ENCODE measurements at regions of chr3 and their contacts with region 1.

Region 1: GRCh38 chr3:32391643-32392535 is at the start of gene CMTM7:
- DNase-seq: peak; percentile 80
- ATAC-seq: peak; percentile 49
- H3K4me3 Mint-ChIP-seq: peak within 1 kb of the TSS; percentile 98
- H3K27ac Mint-ChIP-seq: peak within 1 kb of the TSS; percentile 98
- H3K4me1 Mint-ChIP-seq: peaks cover 63% of the 10 kb centered on the region
- H3K27me3 Mint-ChIP-seq: no peaks in the 10 kb centered on the region
- total RNA-seq, gene CMTM7: 41.1 to 67.0 TPM

Region 2: GRCh38 chr3:32106280-32106928 is 285.5 kb before region 1 on chr3 and contains the start of gene GPD1L:
- CTCF ChIA-PET with region 1: no interaction called
- POLR2A ChIA-PET with region 1: no interaction called
- intact Hi-C with region 1: loop called in 1 of 2 experiments (anchors 5 kb)
- DNase-seq: peak; percentile 96
- ATAC-seq: peak; percentile 99
- H3K4me3 Mint-ChIP-seq: peak within 1 kb of the TSS; percentile 92
- H3K27ac Mint-ChIP-seq: peak within 1 kb of the TSS; percentile 90
- H3K4me1 Mint-ChIP-seq: peaks cover 30% of the 10 kb centered on the region
- H3K27me3 Mint-ChIP-seq: no peaks in the 10 kb centered on the region
- total RNA-seq, gene GPD1L: 6.6 to 10.1 TPM

Region 3: GRCh38 chr3:32374788-32375595 is 16.9 kb before region 1 on chr3:
- CTCF ChIA-PET with region 1: interaction called, 42 read pairs
- POLR2A ChIA-PET with region 1: no interaction called
- intact Hi-C with region 1: no loop called
- DNase-seq: peak; percentile 77
- ATAC-seq: peak; percentile 64
- H3K4me3 Mint-ChIP-seq: no peak overlapping the region
- H3K27ac Mint-ChIP-seq: peak overlapping the region; percentile 35
- H3K4me1 Mint-ChIP-seq: peaks cover 35% of the 10 kb centered on the region
- H3K27me3 Mint-ChIP-seq: no peaks in the 10 kb centered on the region

Region 4: DNA sequence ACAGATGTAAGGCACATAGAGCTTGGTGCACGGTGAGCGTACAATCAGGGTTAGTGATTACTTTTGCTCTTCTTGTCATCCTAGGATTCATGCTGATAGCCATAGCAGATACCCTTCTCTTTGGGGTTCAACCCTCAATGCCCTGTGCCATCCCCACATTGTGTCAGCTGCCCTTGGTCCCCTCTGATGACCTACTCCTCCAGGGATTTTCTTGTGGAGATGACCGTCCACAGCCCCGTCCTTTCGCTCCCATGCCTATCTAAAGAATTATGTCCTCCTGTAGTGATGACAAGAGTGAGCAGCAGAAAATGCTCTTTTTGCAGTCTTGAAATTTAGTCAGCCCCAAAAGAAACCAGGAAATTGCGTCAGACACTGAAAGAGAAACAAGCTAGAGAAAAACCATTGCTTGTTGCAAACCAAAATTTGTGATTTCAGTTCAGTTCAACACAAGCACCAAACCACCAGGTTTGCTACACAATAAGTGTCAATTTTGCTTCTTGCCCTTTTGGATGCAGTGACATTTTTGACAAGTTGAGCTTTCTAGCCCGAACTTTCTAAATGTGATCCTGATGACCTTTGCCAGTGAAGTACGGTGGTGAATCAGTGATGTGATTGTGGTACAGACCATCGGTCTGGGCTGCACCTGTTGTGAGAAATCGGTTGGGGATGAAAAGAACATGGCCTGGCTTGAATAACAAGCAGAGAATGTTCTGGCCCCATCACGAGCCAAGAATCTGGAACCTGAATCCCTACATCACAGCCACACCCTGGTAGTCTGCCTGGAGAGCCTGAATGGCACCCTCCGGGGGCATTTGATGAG is 41.0 kb after region 1 on chr3:
- CTCF ChIA-PET with region 1: interaction called, 3 read pairs
- POLR2A ChIA-PET with region 1: interaction called, 4 read pairs
- intact Hi-C with region 1: loop called (anchors 2 to 5 kb)
- DNase-seq: peak; percentile 60
- ATAC-seq: peak; percentile 65
- H3K4me3 Mint-ChIP-seq: peak overlapping the region; percentile 72
- H3K27ac Mint-ChIP-seq: peak overlapping the region; percentile 99
- H3K4me1 Mint-ChIP-seq: peaks cover 85% of the 10 kb centered on the region
- H3K27me3 Mint-ChIP-seq: no peaks in the 10 kb centered on the region

Region 5: DNA sequence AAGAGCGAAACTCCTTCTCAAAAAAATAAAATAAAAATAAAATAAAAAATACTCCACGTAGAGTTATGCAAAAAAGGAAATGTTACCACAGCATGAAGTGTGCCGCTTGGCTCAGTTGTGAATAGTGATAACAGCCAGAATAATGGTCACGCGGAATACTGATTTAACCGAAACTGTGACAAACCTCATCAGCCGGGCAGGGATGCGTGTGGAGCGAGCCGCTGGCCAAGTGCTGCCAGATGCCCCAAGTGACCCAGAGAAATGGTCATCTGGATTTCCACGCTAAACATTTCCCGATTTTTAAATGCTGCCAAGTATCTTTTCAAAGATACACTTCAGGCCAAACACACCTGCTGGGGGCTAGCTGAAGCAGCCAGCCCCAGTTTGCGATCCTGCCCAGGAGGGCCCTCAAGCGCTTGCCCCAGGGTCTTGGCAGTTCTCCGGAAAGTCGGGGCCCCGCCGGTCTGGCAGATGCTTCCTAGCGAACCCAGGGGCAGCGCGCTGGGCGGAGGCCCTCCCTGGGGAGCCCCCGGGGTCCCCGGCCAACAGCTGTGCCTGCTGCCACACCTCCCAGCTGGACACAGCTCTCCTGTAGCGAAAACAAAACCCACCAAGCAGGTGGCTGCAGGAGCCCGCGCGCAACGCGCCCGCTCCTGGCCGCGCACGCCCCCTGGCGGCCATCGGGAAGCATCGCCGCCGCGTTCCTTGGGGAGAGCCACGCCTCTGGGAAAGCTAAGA is 75.6 kb after region 1 on chr3:
- CTCF ChIA-PET with region 1: interaction called, 15 read pairs
- POLR2A ChIA-PET with region 1: interaction called, 3 read pairs
- intact Hi-C with region 1: no loop called
- DNase-seq: peak; percentile 84
- ATAC-seq: peak; percentile 77
- H3K4me3 Mint-ChIP-seq: no peak overlapping the region
- H3K27ac Mint-ChIP-seq: no peak overlapping the region
- H3K4me1 Mint-ChIP-seq: peaks cover 45% of the 10 kb centered on the region
- H3K27me3 Mint-ChIP-seq: no peaks in the 10 kb centered on the region

Region 6: DNA sequence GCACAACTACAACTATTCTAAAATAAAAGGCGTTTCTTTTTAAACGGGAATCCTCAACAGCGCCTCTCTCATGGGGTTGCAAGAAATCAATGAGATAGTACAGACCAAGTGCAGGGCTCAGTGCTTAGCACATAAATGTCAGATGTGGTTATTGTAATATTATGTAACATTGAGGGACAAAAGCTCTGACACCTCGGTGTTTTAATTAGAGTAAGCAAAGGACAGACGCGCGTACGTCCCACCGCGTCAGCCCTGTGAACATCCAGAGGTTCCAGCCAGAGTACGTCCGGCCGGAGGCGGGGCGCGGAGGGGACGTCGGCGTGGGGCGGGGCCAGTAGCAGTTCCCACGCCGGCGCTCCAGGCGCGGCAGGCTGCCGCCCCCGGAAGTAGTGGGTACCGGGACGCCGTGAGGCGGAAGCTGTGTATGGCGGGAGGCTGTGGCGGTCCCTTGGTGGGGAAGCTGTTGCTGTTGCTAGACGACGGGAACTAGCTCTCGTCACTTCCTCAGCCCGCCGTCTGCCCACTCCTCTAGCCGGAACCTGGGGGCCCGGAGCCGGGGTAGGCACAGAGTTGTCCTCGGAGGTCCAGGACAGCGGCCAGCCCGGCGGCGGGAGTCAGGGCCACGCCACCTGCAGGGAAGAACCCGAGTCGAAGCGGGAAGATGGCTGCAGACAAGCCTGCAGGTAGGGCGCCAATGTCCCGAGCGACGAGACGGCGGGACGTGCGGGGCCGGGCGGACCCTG is 293.1 kb after region 1 on chr3 and contains the start of gene CNOT10:
- CTCF ChIA-PET with region 1: no interaction called
- POLR2A ChIA-PET with region 1: no interaction called
- intact Hi-C with region 1: loop called in 1 of 2 experiments (anchors 5 kb)
- DNase-seq: peak; percentile 98
- ATAC-seq: peak; percentile 96
- H3K4me3 Mint-ChIP-seq: peak within 1 kb of the TSS; percentile 88
- H3K27ac Mint-ChIP-seq: peak within 1 kb of the TSS; percentile 91
- H3K4me1 Mint-ChIP-seq: peaks cover 32% of the 10 kb centered on the region
- H3K27me3 Mint-ChIP-seq: no peaks in the 10 kb centered on the region
- total RNA-seq, gene CNOT10: 57.7 to 76.9 TPM

Measured in activated CD4-positive, alpha-beta T cell treated with anti-CD3 and anti-CD28 coated beads for 36 hours (primary cell).